Cardiac septum (tissue), 1 donor: ENCODE measurements at regions of chr9 and their contacts with region 1.

Region 1: GRCh38 chr9:37251452-37251851 is 131.1 kb downstream of the ZCCHC7 start:
- DNase-seq: no peak

Region 2: DNA sequence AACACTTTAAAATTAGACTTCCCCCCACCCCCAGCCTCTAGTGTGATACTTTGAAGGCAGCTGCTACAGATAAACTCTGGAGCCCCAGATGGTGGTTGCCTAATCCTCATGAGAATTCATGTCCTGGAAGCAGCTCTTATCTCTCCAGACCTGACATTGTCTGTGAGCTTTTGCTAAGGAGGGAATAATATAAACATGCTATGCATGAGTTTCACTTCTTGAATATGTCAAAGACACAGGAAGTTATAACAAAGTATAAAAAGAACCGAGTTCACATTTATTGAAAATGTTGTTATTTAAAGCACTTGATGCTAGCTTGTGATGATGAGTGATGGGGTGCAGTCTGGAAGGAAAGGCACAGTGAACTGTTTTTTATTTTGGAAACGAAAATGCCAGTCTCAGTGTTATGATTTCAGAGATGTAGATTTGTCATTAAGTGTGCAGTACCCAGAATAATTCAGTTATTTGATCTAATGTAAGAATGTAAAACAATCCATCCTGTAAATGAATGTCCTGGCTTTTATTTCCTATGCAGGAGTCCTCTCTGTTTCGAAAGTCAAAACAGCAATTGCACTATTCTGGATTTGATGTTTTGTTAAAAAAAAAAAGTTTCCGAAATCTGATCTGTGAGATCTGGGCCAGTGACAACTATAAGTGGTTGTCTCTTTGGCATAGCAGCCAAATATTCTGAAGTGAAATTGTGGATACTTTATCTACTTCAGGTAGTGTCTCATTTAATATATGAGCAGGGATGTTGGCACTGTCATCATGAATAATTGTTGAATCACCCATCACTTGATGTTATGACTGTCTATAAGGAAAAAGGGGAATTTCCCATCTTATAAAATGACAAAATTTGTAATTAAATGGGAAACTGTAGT is 54.1 kb before region 1 on chr9:
- intact Hi-C with region 1: loop called (anchors 10 kb)
- DNase-seq: no peak